SK-N-SH (cell line): ENCODE measurements at regions of chr3 and their contacts with region 1.

Region 1: DNA sequence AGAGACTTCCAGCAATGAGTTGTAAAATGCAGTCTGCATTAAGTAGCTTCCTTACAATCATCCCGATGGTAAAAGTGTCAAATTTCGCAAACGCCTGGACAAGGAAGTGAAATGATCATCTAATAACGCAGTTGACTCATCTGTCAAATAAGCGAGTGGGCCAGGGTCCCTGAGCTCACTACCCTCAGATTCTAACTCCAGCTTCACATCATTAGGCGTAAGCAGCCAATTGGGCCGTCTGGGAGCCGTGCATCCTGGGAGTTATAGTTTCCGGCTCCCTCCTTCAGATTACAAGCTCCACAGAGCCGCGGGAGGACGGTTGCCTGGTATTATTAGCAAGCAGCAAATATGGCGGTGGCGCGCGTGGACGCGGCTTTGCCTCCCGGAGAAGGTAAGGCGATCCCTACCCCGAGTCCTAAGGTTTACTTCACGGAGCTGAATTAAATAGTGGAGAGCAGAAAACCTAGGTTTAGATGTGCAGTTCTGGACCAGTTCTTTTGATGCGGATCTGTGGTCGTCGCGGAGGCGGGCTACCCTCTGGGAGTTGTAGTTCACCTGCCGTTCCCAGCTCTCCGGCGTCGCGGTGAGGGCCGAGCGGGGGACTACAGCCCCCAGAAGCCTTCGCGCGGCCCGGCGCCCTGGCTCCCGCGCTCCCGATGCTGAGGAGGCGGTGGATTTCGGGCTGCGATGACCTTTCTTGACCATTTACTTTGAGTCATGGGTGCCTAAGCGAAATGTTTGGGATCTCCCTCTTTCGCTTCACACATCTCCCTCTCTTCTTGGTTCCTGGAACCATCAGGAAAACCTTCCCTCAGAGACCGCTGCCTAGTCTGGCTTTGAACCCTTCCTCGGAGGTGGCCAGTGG is at the start of gene CEP97:
- DNase-seq: peak; percentile 87
- H3K4me3 ChIP-seq: peak within 1 kb of the TSS; percentile 86 to 99
- H3K27ac ChIP-seq: peak within 1 kb of the TSS; percentile 68 to 92
- H3K4me1 ChIP-seq: peaks cover 3 to 4% of the 10 kb centered on the region in 2 experiments; a peak in 3 of 4 replicates
- H3K27me3 ChIP-seq: no peaks in the 10 kb centered on the region
- CTCF ChIP-seq: no peak
- EP300 ChIP-seq: no peak; a peak in 1 of 4 replicates
- RAD21 ChIP-seq: no peak
- polyA plus RNA-seq, gene CEP97: 1.3 and 1.5 TPM in 2 replicates

Region 2: DNA sequence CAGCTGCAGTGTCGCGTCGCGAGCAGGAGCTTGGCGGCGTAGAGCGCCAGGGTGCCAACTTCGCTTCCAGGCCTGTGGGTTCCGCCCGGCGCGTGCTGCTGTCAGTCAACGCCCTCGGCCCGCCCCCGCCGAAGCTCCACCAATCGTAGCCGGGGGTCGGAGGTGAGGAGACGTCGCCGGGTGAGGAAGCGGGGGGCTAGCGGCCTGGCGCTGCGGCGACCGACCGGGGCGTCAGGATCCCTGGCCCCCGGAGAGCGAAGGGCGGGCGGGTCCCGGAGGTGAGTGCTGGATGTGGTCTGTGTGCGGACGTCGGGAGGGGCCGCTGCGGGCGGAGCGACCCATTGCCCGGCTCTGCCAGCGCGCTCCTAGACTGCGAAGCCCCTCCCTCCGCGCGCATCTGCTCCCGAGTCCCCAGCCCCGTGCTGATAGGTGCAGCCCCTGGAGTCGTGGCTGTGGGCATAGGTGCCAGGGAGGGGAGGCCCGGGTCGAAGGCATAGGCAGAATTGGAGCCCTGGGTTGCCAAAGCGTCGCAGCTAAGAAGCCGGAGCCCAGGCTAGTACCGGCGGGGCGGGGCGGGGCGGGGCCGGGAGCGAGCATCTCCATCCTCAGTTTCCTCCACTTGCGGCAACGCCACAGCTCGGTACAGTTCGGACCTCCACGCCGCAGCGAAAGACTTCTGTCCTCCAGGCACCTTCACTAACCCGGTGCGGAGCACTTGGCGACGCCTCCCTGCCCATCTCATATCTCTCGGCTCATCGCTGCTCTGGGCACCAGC is 54.7 kb after region 1 on chr3 and contains the start of gene NXPE3:
- CTCF ChIA-PET with region 1: interaction called, 6 read pairs
- POLR2A ChIA-PET with region 1: interaction called, 13 read pairs
- DNase-seq: peak; percentile 94
- H3K4me3 ChIP-seq: peak within 1 kb of the TSS; percentile 73 to 79
- H3K27ac ChIP-seq: peak within 1 kb of the TSS; percentile 79 to 94
- H3K4me1 ChIP-seq: peaks cover 0 to 22% of the 10 kb centered on the region in 2 experiments; a peak in 2 of 4 replicates
- H3K27me3 ChIP-seq: no peaks in the 10 kb centered on the region
- CTCF ChIP-seq: no peak
- EP300 ChIP-seq: no peak
- RAD21 ChIP-seq: no peak
- polyA plus RNA-seq, gene NXPE3: 21.3 and 25.1 TPM in 2 replicates

Region 3: DNA sequence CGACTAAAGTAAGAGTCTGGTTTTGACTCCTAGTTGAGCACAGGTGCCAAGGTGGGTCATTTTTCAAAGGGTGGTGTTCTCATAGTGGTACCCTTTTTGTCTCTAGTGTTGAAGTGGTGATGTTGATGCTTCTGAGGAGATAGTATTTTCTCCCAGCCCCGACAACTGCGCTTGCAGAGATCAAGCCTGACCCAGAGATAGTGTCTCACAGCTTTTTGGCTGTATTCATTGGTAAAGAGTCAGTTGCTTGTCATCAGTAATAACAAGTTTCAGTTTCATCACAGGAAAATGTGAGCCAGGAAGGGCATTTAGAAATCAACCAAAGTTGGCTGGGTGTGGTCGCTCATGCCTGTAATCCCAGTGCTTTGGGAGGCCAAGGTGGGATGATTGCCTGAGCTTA is 264.0 kb after region 1 on chr3:
- CTCF ChIA-PET with region 1: no interaction called
- POLR2A ChIA-PET with region 1: no interaction called
- DNase-seq: no peak
- H3K4me3 ChIP-seq: no peak overlapping the region
- H3K27ac ChIP-seq: no peak overlapping the region
- H3K4me1 ChIP-seq: no peaks in the 10 kb centered on the region
- H3K27me3 ChIP-seq: no peaks in the 10 kb centered on the region
- CTCF ChIP-seq: no peak
- EP300 ChIP-seq: no peak
- RAD21 ChIP-seq: no peak

Region 4: DNA sequence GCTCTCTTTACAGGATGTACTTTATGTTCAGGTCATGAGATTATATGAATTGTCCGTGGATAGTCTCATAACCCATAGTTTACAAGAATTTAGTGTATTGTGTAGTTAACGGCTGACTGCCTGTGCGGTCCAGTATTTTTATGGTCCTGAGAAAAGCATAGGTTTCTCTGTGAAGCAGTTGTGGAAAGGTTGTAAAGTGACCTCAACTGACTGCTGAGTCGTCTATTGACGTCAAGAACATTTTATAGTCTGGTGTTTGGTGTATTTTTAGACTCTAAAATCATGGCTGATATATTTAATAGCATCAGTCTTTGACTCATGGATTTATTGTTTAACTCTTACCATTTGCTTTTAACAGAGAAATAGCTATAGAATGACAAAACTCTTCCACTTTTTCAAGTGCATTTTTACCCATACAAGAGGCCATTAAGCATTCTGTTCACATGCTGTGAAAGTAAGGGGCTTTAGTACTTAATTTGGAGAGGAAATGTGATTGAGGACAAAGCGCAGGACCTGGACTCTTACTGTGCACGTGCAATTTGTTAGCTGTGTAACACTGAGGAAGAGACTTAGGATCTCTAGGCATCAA is 365.4 kb after region 1 on chr3:
- CTCF ChIA-PET with region 1: no interaction called
- POLR2A ChIA-PET with region 1: no interaction called
- DNase-seq: no peak
- H3K4me3 ChIP-seq: no peak overlapping the region
- H3K27ac ChIP-seq: peak overlapping the region in 1 of 2 experiments; percentile 81; a peak in 3 of 4 replicates
- H3K4me1 ChIP-seq: peaks cover 0 to 23% of the 10 kb centered on the region in 2 experiments; a peak in 3 of 4 replicates
- H3K27me3 ChIP-seq: no peaks in the 10 kb centered on the region
- CTCF ChIP-seq: no peak
- EP300 ChIP-seq: peak in 1 of 2 experiments; percentile 77; a peak in 1 of 4 replicates
- RAD21 ChIP-seq: no peak